ENCODE measurements at regions of chr14 and their contacts with region 1.

Region 1: DNA sequence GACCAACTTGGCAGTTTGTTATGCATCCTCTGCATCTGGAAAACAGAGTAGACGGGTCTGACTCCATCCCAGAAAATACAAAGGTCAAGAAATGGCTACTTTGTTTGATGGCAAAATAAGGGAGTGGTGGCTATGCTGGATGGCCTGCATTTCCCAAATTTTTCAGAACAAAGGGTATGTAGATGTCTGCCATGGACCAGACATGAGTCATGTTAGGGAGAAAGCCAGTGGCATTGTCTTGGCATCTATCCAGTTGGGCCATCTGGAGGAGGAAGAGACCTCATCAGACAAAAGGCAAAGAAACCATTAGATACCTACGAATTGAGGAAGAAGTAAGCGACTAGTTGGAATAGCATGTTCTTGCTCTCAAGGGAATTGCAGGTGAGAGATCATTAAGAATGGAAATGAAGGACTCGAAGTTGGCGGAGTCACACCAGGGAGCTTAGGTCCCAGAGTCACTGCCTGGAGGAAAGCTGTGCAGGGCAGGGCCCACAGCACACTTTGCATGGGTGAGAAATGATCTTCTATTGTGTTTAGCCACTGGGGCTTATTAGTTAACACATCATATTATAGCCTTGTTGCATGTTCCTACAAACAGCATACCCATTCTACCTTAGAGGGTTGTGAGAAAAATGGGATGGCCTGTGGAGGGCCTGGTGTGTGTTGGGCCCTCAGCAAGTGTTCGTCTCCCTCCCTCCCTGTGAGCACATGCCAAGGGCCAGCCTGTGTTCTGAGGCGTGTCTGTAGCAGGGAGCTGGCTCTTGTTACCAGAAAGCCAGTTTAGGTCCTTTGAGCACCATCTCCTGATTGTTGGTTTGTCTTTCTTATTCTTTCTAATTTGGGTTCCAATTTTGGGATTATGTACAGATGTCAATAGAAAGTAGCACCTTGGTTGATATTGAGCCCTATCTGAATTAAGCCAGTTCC is 119.4 kb downstream of the KTN1 start:
- DNase-seq: no peak
- H3K4me3 ChIP-seq: no peak overlapping the region
- H3K27ac ChIP-seq: no peak overlapping the region
- H3K4me1 ChIP-seq: peaks cover 8% of the 10 kb centered on the region
- H3K27me3 ChIP-seq: no peaks in the 10 kb centered on the region
- CTCF ChIP-seq: no peak

Region 2: GRCh38 chr14:56474419-56475022 is 775.1 kb after region 1 on chr14:
- dilution Hi-C with region 1: loop called (anchors 25 kb)
- DNase-seq: no peak
- H3K4me3 ChIP-seq: no peak overlapping the region
- H3K27ac ChIP-seq: no peak overlapping the region
- H3K4me1 ChIP-seq: no peaks in the 10 kb centered on the region
- H3K27me3 ChIP-seq: no peaks in the 10 kb centered on the region
- CTCF ChIP-seq: peak; percentile 45 to 74 (median 71)